GM10248 (cell line): ENCODE measurements at regions of chr17 and their contacts with region 1.

Region 1: DNA sequence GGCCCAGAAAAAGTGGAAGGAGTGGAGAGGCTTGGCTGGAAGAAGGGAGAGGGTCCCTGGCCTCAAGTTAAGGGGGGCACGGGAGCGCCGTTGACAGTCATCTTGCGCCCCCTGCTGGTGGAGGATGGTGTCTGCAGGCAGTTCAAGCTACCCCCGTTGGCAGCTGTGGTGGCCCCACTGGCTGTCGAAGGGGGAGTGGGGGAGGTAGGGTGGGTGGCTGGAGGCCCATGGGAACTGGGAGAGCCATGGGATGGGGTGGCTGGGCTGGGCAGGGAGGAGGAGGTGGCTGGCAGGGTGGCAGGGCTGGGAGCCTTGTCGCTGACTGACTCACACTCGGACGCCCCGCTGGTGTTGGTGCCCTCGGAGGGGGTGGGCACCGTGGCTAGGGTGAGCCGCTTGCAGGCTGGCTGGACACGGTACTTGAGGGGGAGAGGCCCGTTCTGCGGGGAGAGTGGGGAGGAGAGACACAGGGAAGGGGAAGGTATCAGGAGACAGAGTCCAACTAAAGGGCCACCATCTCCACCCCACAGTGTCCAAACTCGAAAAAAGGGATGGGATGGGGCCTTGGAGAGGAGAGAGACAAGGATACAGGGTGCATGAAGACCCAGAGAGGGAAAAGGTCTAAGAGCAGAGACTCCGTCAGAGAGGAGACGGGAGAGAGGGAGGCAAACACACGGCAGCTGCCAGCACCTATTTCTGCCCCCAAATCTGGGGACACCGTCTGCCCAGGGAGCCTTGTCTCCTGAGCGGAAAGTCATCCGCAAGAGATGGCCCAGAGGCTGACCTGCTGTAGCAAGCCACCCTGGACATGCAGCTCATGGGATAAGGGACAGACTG is 5.2 kb downstream of the CISD3 start:
- DNase-seq: peak; percentile 87
- CTCF ChIP-seq: peak; percentile 94

Region 2: GRCh38 chr17:38674749-38675615 is 60.4 kb before region 1 on chr17 and contains the start of gene EPOP:
- CTCF ChIA-PET with region 1: interaction called, 80 read pairs
- POLR2A ChIA-PET with region 1: no interaction called
- DNase-seq: peak; percentile 94
- CTCF ChIP-seq: no peak

Region 3: GRCh38 chr17:38685491-38685890 is 49.9 kb before region 1 on chr17:
- CTCF ChIA-PET with region 1: interaction called, 11 read pairs
- POLR2A ChIA-PET with region 1: no interaction called
- DNase-seq: no peak
- CTCF ChIP-seq: no peak

Region 4: DNA sequence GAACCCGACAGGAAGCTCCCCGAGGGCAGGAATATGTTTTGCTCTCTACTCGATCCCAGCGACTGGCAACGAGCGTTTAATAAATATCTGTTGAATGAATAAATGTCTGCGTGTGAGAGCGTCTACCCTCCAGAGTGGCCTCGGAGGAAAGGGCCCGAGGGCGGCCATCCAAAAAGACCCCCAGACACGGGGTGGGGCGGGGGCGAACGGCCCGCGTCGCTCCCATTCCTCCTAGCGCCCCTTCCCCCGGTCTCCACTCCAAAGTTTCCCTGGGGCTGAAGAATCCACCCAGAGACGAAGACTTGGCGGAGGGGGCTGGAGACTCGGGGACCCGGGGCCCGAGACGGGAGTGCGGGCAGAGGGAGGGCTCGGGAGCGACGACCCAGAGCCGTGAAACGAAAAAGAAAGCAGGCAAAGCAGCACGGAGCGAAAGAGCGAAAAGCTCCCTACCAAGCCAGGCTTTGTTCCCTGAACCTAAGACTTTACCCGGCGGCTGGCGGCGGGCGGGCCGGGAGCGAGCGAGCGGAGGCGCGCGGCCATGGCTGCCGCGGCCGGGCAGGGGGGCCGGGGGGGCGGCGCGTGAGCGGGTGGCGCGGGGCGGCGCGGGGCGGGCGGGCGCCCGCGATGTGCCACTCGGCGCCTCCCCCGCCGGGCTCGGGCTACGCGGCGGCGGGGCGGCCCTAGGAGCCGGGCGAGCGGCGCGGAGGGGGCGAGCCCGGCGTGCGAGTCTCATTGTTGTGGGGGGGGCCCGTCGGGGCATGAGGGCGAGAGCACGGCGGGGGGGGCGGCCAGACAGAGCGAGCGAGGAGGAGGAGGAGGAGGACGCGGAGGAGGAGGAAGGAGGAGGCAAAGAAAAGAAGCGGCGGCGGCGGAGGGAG is 30.5 kb before region 1 on chr17 and contains the start of gene MLLT6:
- CTCF ChIA-PET with region 1: interaction called, 35 read pairs
- POLR2A ChIA-PET with region 1: no interaction called
- DNase-seq: peak; percentile 71
- CTCF ChIP-seq: no peak

Region 5: GRCh38 chr17:38719943-38720641 is 15.3 kb before region 1 on chr17:
- CTCF ChIA-PET with region 1: interaction called, 23 read pairs
- POLR2A ChIA-PET with region 1: no interaction called
- DNase-seq: no peak
- CTCF ChIP-seq: no peak

Region 6: GRCh38 chr17:38752119-38752929 is 16.9 kb after region 1 on chr17 and contains the start of gene PSMB3:
- CTCF ChIA-PET with region 1: interaction called, 37 read pairs
- POLR2A ChIA-PET with region 1: no interaction called
- DNase-seq: peak; percentile 97
- CTCF ChIP-seq: no peak